CD4-positive, alpha-beta T cell (primary cell): ENCODE measurements at regions of chr4 and their contacts with region 1.

Region 1: DNA sequence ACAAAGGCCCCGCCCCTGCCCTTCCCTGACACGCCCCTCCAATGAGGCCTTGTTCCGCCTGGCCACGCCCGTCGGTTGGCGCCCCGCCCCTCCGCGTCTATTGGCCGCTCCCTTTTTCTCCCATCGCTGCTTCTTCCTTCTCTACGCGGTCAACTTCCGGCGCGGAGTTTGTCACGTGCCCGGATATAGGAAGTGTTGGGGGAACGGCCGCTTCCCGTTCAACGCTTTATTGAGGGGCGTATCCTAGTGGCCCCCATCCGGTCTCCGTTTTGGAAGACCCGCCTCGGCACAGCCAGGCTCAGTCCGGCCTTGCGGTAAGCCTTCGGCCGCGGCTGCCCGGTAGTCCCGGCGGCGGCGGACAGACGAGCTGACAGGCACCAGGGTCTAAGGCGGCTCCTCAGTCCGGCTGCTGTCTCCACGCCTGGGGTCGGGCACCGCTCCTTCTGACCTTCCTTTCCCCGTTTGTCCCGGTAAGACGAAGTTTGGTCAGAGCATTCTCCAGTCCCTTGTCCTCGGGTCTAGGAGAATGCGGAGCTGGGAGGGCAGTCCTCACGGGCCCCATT is at the start of gene EXOC1:
- DNase-seq: peak; percentile 93 to 99 (median 97)
- ATAC-seq: peak; percentile 95
- H3K4me3 ChIP-seq: peak within 1 kb of the TSS; percentile 96
- H3K4me3 Mint-ChIP-seq: no peak within 1 kb of the TSS
- H3K27ac ChIP-seq: peak within 1 kb of the TSS; percentile 68 to 86
- H3K27ac Mint-ChIP-seq: peak within 1 kb of the TSS; percentile 60
- H3K4me1 ChIP-seq: peaks cover 28% of the 10 kb centered on the region
- H3K4me1 Mint-ChIP-seq: peaks cover 33% of the 10 kb centered on the region
- H3K27me3 ChIP-seq: no peaks in the 10 kb centered on the region
- H3K27me3 Mint-ChIP-seq: no peaks in the 10 kb centered on the region
- CTCF ChIP-seq: no peak
- total RNA-seq, gene EXOC1: 15.2 to 15.7 TPM

Region 2: DNA sequence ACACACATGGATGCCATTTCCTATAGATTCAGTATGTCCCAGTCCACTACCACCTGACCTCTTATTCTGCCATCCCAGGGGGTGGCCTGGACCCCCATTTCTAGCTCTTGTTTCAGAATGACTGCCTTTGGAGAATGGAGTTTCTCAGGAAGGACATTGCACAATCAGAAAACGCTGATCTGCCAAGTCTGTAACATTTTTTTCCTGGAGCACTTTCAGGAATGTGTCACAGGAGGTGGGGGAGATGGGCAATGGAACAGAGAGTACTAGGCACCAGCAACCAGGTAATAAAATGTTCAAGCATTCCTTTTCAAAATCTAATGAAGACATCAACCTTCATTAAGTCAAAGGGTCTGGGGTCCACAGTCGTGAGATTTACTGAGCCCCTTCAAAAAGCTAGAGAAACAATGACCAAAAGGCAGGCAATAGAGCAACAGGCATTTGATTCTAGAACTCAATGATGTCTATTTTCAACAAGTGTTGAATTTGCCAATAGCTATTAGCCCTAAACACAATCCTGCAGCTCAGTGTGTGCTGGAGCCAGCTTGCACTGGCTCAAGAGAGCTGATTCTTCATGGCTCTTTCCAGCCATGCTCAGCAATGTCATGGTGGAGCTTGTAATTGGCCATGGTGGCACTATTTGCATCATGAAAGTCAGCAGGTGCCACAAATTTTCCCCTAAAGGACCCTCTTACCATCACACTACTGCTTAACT is 815.2 kb before region 1 on chr4:
- CTCF ChIA-PET with region 1: no interaction called
- POLR2A ChIA-PET with region 1: no interaction called
- intact Hi-C with region 1: no loop called
- DNase-seq: no peak
- ATAC-seq: no peak
- H3K4me3 ChIP-seq: no peak overlapping the region
- H3K4me3 Mint-ChIP-seq: no peak overlapping the region
- H3K27ac ChIP-seq: no peak overlapping the region
- H3K27ac Mint-ChIP-seq: no peak overlapping the region
- H3K4me1 ChIP-seq: no peaks in the 10 kb centered on the region
- H3K4me1 Mint-ChIP-seq: no peaks in the 10 kb centered on the region
- H3K27me3 ChIP-seq: peaks cover 0 to 5% of the 10 kb centered on the region in 2 experiments
- H3K27me3 Mint-ChIP-seq: peaks cover 5% of the 10 kb centered on the region
- CTCF ChIP-seq: no peak

Region 3: GRCh38 chr4:55395529-55396307 is 457.8 kb before region 1 on chr4 and contains the start of gene TMEM165:
- CTCF ChIA-PET with region 1: no interaction called
- POLR2A ChIA-PET with region 1: no interaction called
- intact Hi-C with region 1: loop called (anchors 2 to 5 kb)
- DNase-seq: peak; percentile 77 to 94 (median 84)
- ATAC-seq: peak; percentile 93
- H3K4me3 ChIP-seq: peak within 1 kb of the TSS; percentile 79
- H3K4me3 Mint-ChIP-seq: peak within 1 kb of the TSS; percentile 97
- H3K27ac ChIP-seq: peak within 1 kb of the TSS; percentile 73 to 94
- H3K27ac Mint-ChIP-seq: peak within 1 kb of the TSS; percentile 89
- H3K4me1 ChIP-seq: peaks cover 34% of the 10 kb centered on the region
- H3K4me1 Mint-ChIP-seq: peaks cover 44% of the 10 kb centered on the region
- H3K27me3 ChIP-seq: no peaks in the 10 kb centered on the region
- H3K27me3 Mint-ChIP-seq: no peaks in the 10 kb centered on the region
- CTCF ChIP-seq: no peak
- total RNA-seq, gene TMEM165: 44.8 to 46.0 TPM

Region 4: GRCh38 chr4:55609393-55609866 is 244.1 kb before region 1 on chr4:
- CTCF ChIA-PET with region 1: no interaction called
- POLR2A ChIA-PET with region 1: no interaction called
- intact Hi-C with region 1: no loop called
- DNase-seq: peak in 3 of 14 experiments; percentile 4 to 17 (median 6)
- ATAC-seq: no peak
- H3K4me3 ChIP-seq: no peak overlapping the region
- H3K4me3 Mint-ChIP-seq: no peak overlapping the region
- H3K27ac ChIP-seq: no peak overlapping the region
- H3K27ac Mint-ChIP-seq: no peak overlapping the region
- H3K4me1 ChIP-seq: peaks cover 3% of the 10 kb centered on the region
- H3K4me1 Mint-ChIP-seq: peaks cover 7% of the 10 kb centered on the region
- H3K27me3 ChIP-seq: no peaks in the 10 kb centered on the region
- H3K27me3 Mint-ChIP-seq: peaks cover 12% of the 10 kb centered on the region
- CTCF ChIP-seq: no peak

Region 5: GRCh38 chr4:56530269-56531148 is 676.9 kb after region 1 on chr4:
- CTCF ChIA-PET with region 1: no interaction called
- POLR2A ChIA-PET with region 1: no interaction called
- intact Hi-C with region 1: loop called in 1 of 2 experiments (anchors 10 kb)
- DNase-seq: peak; percentile 64 to 89 (median 74)
- ATAC-seq: peak; percentile 96
- H3K4me3 ChIP-seq: peak overlapping the region; percentile 82
- H3K4me3 Mint-ChIP-seq: peak overlapping the region; percentile 79
- H3K27ac ChIP-seq: no peak overlapping the region
- H3K27ac Mint-ChIP-seq: no peak overlapping the region
- H3K4me1 ChIP-seq: peaks cover 18% of the 10 kb centered on the region
- H3K4me1 Mint-ChIP-seq: no peaks in the 10 kb centered on the region
- H3K27me3 ChIP-seq: peaks cover 17 to 23% of the 10 kb centered on the region in 2 experiments
- H3K27me3 Mint-ChIP-seq: no peaks in the 10 kb centered on the region
- CTCF ChIP-seq: no peak